GM12878 (cell line): ENCODE measurements at regions of chr7 and their contacts with region 1.

Region 1: GRCh38 chr7:24819916-24820689 is 62.8 kb upstream of the GSDME start:
- DNase-seq: no peak
- ATAC-seq: peak; percentile 84
- H3K4me3 ChIP-seq: no peak overlapping the region
- H3K27ac ChIP-seq: peak overlapping the region; percentile 81
- H3K4me1 ChIP-seq: peaks cover 21% of the 10 kb centered on the region
- H3K27me3 ChIP-seq: no peaks in the 10 kb centered on the region
- CTCF ChIP-seq: peak; percentile 82 to 95 (median 87)
- EP300 ChIP-seq: peak in 1 of 2 experiments; percentile 33; a peak in 1 of 4 replicates
- POLR2A ChIP-seq: no peak
- RAD21 ChIP-seq: peak; percentile 99

Region 2: GRCh38 chr7:24836084-24836483 is 16.0 kb after region 1 on chr7:
- CTCF ChIA-PET with region 1: interaction called, 48 read pairs
- POLR2A ChIA-PET with region 1: interaction called, 9 read pairs
- RAD21 ChIA-PET with region 1: interaction called, 54 read pairs
- SMC1A ChIA-PET with region 1: interaction called, 103 read pairs
- in situ Hi-C with region 1: no loop called
- intact Hi-C with region 1: no loop called
- DNase-seq: peak; percentile 76
- ATAC-seq: peak; percentile 85
- H3K4me3 ChIP-seq: 0 out of 2 replicates have a peak overlapping the region, but pooled peaks have one; percentile 9
- H3K27ac ChIP-seq: peak overlapping the region; percentile 29; the same call in 1 of the 2 replicates
- H3K4me1 ChIP-seq: peaks cover 48% of the 10 kb centered on the region
- H3K27me3 ChIP-seq: no peaks in the 10 kb centered on the region
- CTCF ChIP-seq: no peak
- EP300 ChIP-seq: peak; percentile 60 to 70; a peak in 3 of 4 replicates
- POLR2A ChIP-seq: no peak
- RAD21 ChIP-seq: no peak

Region 3: DNA sequence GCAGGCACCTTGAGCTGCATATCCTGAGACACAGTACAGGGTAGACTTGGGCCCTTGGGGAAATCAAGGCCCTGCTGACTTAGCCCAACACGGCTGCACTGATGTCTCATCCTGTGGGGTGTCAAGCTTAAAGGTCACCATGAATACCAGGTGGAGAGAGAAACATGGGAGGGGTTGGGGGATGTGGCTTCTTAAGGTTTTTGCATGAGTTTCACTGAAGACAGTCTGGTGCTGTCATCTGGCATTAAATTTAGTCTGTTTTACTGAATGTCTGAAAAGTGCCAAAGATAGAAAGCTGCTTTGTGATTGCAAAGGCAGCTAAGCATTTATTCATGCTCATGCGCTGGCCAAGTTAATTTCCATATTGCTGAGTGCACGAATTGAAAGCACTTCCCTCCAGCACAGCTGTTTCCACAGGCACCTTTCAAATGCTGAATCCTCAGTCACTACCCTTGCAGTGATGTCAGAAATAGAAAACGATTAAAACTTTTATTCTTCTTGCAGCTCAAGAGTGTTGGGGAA is 57.7 kb after region 1 on chr7:
- CTCF ChIA-PET with region 1: interaction called, 6 read pairs
- POLR2A ChIA-PET with region 1: no interaction called
- RAD21 ChIA-PET with region 1: interaction called, 8 read pairs
- SMC1A ChIA-PET with region 1: interaction called, 26 read pairs
- in situ Hi-C with region 1: no loop called
- intact Hi-C with region 1: no loop called
- DNase-seq: peak; percentile 62
- ATAC-seq: peak; percentile 88
- H3K4me3 ChIP-seq: no peak overlapping the region; the same call in 1 of the 2 replicates
- H3K27ac ChIP-seq: peak overlapping the region; percentile 5; the same call in 1 of the 2 replicates
- H3K4me1 ChIP-seq: peaks cover 16% of the 10 kb centered on the region
- H3K27me3 ChIP-seq: no peaks in the 10 kb centered on the region
- CTCF ChIP-seq: no peak
- EP300 ChIP-seq: no peak
- POLR2A ChIP-seq: no peak
- RAD21 ChIP-seq: no peak

Region 4: DNA sequence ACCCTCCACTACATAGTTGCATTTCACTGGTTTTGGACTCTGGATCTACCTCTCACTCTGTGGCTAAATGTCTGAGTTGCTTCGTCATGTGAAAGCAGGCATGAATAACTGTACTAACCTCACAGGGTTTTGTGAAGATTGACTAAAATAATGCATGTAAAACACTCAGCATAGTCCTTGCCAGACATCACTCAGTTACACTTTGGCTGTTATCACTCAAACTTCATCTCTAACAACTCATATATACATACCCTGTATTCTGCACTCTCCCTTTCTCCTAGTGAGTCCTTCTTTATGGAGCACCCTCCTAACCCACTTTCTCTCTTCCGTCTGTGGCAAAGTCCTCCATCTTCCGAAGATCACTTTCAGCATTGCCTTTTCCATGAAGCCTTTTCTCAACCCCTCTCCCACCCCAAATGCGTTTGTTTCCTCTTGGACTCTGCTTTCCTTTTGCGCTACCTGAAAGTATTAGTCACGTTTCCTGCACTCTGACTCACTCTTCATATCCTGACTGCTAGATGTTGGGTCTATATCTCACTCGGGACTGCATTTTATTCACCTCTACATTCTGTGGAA is 87.3 kb after region 1 on chr7:
- CTCF ChIA-PET with region 1: interaction called, 19 read pairs
- POLR2A ChIA-PET with region 1: interaction called, 3 read pairs
- RAD21 ChIA-PET with region 1: interaction called, 6 read pairs
- SMC1A ChIA-PET with region 1: interaction called, 5 read pairs
- in situ Hi-C with region 1: no loop called
- intact Hi-C with region 1: no loop called
- DNase-seq: peak; percentile 44
- ATAC-seq: peak; percentile 74
- H3K4me3 ChIP-seq: peak overlapping the region; percentile 4; the same call in 1 of the 2 replicates
- H3K27ac ChIP-seq: peak overlapping the region; percentile 80
- H3K4me1 ChIP-seq: peaks cover 51% of the 10 kb centered on the region
- H3K27me3 ChIP-seq: no peaks in the 10 kb centered on the region
- CTCF ChIP-seq: no peak
- EP300 ChIP-seq: no peak
- POLR2A ChIP-seq: no peak
- RAD21 ChIP-seq: 0 out of 2 replicates have a peak, but pooled peaks have one; percentile 7

Region 5: DNA sequence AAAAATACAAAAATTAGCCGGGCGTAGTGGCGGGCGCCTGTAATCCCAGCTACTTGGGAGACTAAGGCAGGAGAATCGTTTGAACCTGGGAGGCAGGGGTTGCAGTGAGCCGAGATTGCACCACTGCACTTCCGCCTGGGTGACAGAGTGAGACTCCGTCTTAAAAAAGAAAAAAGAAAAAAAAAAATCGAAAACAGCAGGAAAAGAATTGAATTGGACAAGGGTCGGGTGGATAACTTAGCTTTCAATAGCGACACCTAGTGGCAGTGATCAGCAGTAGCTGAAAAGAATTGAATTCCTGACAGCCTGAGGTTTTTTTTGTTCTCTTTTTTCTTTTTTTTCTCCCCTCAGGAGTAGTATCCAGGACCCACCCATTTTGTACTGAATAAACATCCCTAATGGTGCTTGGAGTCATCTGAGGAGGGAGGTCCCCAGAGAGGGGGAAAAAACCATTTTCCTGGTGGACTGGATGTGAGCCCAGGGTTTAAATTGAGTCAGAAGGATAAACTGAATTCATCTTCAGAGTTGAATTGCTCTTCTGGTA is 249.9 kb after region 1 on chr7:
- CTCF ChIA-PET with region 1: interaction called, 119 read pairs
- POLR2A ChIA-PET with region 1: interaction called, 4 read pairs
- RAD21 ChIA-PET with region 1: interaction called, 47 read pairs
- SMC1A ChIA-PET with region 1: interaction called, 23 read pairs
- in situ Hi-C with region 1: no loop called
- intact Hi-C with region 1: loop called (anchors 1 kb)
- DNase-seq: no peak
- ATAC-seq: peak; percentile 79
- H3K4me3 ChIP-seq: no peak overlapping the region
- H3K27ac ChIP-seq: no peak overlapping the region
- H3K4me1 ChIP-seq: no peaks in the 10 kb centered on the region
- H3K27me3 ChIP-seq: no peaks in the 10 kb centered on the region; a peak in 1 of 4 replicates
- CTCF ChIP-seq: peak; percentile 72 to 82 (median 78)
- EP300 ChIP-seq: no peak
- POLR2A ChIP-seq: no peak
- RAD21 ChIP-seq: peak; percentile 86

Region 6: GRCh38 chr7:25669961-25670841 is 850.1 kb after region 1 on chr7:
- CTCF ChIA-PET with region 1: no interaction called
- POLR2A ChIA-PET with region 1: no interaction called
- RAD21 ChIA-PET with region 1: no interaction called
- SMC1A ChIA-PET with region 1: no interaction called
- in situ Hi-C with region 1: no loop called
- intact Hi-C with region 1: no loop called
- DNase-seq: no peak
- ATAC-seq: no peak
- H3K4me3 ChIP-seq: no peak overlapping the region
- H3K27ac ChIP-seq: no peak overlapping the region
- H3K4me1 ChIP-seq: no peaks in the 10 kb centered on the region
- H3K27me3 ChIP-seq: no peaks in the 10 kb centered on the region
- CTCF ChIP-seq: no peak
- EP300 ChIP-seq: no peak
- POLR2A ChIP-seq: no peak
- RAD21 ChIP-seq: no peak